Aorta (tissue), 5 donors: ENCODE measurements at regions of chr12 and their contacts with region 1.

Region 1: DNA sequence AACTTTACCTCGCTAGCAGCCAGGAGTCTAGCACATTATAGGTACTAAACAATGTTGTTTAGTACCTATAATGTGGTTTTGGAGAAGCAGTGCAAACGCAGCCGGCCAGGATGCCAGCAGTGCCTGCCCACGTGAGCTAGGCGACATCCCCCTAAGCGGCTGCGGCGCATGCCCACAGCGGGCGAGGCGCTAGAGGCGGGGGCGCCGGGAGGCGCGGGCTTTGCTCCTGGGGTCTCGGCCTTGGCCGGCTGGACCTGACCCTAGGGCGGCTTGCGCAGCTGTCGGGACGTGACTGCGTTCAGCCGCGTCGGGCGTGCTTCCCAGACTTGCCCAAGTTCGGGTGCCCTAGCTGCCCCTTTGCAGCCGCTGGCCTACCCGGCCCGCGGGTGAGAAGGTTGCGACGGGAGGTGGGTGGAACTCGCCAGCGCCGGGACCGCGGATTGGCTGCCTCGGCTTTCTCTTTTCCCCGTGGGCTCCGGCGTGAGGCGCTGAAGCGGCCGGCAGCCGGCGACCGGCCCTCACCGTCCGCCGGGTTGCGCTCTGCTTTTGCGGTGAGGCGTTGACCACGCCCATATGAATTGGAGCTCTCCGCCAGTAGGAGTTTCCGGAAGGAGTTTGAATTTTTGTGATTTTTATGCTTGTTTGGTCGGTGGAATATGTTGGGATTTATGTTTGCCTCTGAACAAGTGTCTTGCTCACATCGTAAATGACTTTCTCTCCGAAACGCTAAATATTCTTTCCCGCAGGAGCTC is at the start of gene TMEM19:
- DNase-seq: peak; percentile 95 to 97
- ATAC-seq: peak; percentile 99
- H3K4me3 ChIP-seq: peak within 1 kb of the TSS; percentile 34 to 73
- H3K27ac ChIP-seq: peak within 1 kb of the TSS in 1 of 2 donors; percentile 49
- H3K4me1 ChIP-seq: peaks cover 0 to 4% of the 10 kb centered on the region in 2 donors
- H3K27me3 ChIP-seq: no peaks in the 10 kb centered on the region
- total RNA-seq, gene TMEM19: 17.6 to 22.8 TPM

Region 2: GRCh38 chr12:71663561-71664294 is 22.4 kb before region 1 on chr12 and contains the start of gene ZFC3H1:
- intact Hi-C with region 1: loop called (anchors 1 to 2 kb)
- DNase-seq: peak; percentile 95 to 96
- ATAC-seq: peak; percentile 97
- H3K4me3 ChIP-seq: peak within 1 kb of the TSS; percentile 78 to 84
- H3K27ac ChIP-seq: peak within 1 kb of the TSS; percentile 95 to 96
- H3K4me1 ChIP-seq: no peaks in the 10 kb centered on the region
- H3K27me3 ChIP-seq: no peaks in the 10 kb centered on the region
- total RNA-seq, gene ZFC3H1: 71.7 to 95.3 TPM

Region 3: GRCh38 chr12:71671816-71672215 is 14.3 kb before region 1 on chr12:
- intact Hi-C with region 1: loop called in 1 of 2 experiments (anchors 1 kb)
- DNase-seq: no peak
- ATAC-seq: no peak
- H3K4me3 ChIP-seq: no peak overlapping the region
- H3K27ac ChIP-seq: no peak overlapping the region
- H3K4me1 ChIP-seq: no peaks in the 10 kb centered on the region
- H3K27me3 ChIP-seq: no peaks in the 10 kb centered on the region

Region 4: DNA sequence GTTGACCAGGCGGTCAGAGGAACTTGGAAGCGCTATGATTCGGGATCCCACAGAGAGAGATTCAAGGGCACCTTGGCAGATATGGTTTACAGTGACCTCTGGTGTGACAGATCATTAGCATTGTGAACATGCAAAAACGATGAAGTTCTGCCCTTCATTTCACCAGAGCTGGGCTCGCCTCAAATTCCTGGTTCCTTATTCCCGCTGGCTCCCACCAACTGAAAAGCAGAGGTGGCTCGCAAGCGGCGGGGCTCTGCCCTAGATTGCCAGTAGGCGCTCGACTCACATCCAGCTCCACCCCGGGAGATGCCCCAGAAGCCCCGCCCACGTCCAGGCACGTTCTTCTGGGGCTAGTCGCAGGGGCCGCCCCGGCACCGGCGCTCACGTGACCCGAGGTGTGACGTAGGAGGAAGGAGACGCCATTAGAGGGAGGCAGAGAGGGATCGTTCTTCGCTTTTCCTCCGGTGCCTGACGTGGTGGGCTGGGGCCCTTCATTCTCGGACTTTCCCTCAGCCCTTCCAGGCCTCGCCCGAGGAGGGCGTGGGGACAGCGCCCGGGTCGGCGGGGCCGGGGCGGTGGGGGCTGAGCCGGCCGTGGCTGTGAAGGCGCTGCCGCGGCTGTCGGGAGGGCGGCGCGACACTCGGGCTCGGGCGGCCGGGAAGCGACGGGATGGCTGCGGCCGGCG is 68.5 kb after region 1 on chr12 and contains the start of gene RAB21:
- intact Hi-C with region 1: loop called in 1 of 2 experiments (anchors 5 kb)
- DNase-seq: peak; percentile 100
- ATAC-seq: peak; percentile 98
- H3K4me3 ChIP-seq: peak within 1 kb of the TSS; percentile 93
- H3K27ac ChIP-seq: peak within 1 kb of the TSS; percentile 95 to 99
- H3K4me1 ChIP-seq: peaks cover 2 to 3% of the 10 kb centered on the region in 2 donors
- H3K27me3 ChIP-seq: no peaks in the 10 kb centered on the region
- total RNA-seq, gene RAB21: 97.2 to 113 TPM

Region 5: DNA sequence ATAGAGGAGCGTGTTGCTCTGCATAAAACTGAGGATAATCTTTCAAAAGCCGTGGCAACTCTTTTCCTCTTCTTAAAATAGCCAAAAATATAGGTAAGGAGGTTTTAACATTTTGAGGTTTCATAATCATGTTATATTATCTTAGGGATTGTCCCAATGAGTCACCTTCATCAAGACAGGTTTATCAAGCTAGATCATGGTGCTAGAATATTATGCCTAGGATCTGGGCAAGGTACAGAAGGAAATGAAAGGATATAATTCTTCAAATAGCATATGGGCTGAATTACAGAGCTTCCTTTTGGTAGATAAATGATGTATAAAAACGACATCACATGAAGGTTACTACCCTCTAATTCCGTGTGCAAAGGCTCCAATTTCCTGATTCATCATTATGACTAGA is 124.8 kb after region 1 on chr12:
- intact Hi-C with region 1: no loop called
- DNase-seq: no peak
- ATAC-seq: no peak
- H3K4me3 ChIP-seq: no peak overlapping the region
- H3K27ac ChIP-seq: no peak overlapping the region
- H3K4me1 ChIP-seq: no peaks in the 10 kb centered on the region
- H3K27me3 ChIP-seq: no peaks in the 10 kb centered on the region

Region 6: GRCh38 chr12:71840231-71840847 is 154.2 kb after region 1 on chr12:
- intact Hi-C with region 1: loop called in 1 of 2 experiments (anchors 10 kb)
- DNase-seq: no peak
- ATAC-seq: peak; percentile 60
- H3K4me3 ChIP-seq: peak overlapping the region; percentile 91 to 97
- H3K27ac ChIP-seq: peak overlapping the region; percentile 50 to 94
- H3K4me1 ChIP-seq: peaks cover 0 to 8% of the 10 kb centered on the region in 2 donors
- H3K27me3 ChIP-seq: no peaks in the 10 kb centered on the region

Region 7: GRCh38 chr12:71999795-72000194 is 313.7 kb after region 1 on chr12:
- intact Hi-C with region 1: no loop called
- DNase-seq: no peak
- ATAC-seq: no peak
- H3K4me3 ChIP-seq: no peak overlapping the region
- H3K27ac ChIP-seq: no peak overlapping the region
- H3K4me1 ChIP-seq: no peaks in the 10 kb centered on the region
- H3K27me3 ChIP-seq: peaks cover 0 to under 1% of the 10 kb centered on the region in 2 donors